A673 (cell line): ENCODE measurements at regions of chr12 and their contacts with region 1.

Region 1: GRCh38 chr12:62435303-62436163 is 31.1 kb upstream of the MON2 start:
- DNase-seq: peak; percentile 79
- H3K4me3 ChIP-seq: peak overlapping the region; percentile 45
- H3K27ac ChIP-seq: no peak overlapping the region
- H3K4me1 ChIP-seq: no peaks in the 10 kb centered on the region
- H3K27me3 ChIP-seq: peaks cover 8% of the 10 kb centered on the region
- CTCF ChIP-seq: peak; percentile 67

Region 2: GRCh38 chr12:62239571-62239970 is 196.0 kb before region 1 on chr12:
- CTCF ChIA-PET with region 1: no interaction called
- POLR2A ChIA-PET with region 1: no interaction called
- intact Hi-C with region 1: no loop called
- DNase-seq: no peak
- H3K4me3 ChIP-seq: no peak overlapping the region
- H3K27ac ChIP-seq: no peak overlapping the region
- H3K4me1 ChIP-seq: no peaks in the 10 kb centered on the region
- H3K27me3 ChIP-seq: no peaks in the 10 kb centered on the region
- CTCF ChIP-seq: no peak

Region 3: GRCh38 chr12:62581288-62582064 is 145.9 kb after region 1 on chr12:
- CTCF ChIA-PET with region 1: no interaction called
- POLR2A ChIA-PET with region 1: no interaction called
- intact Hi-C with region 1: loop called (anchors 10 kb)
- DNase-seq: peak; percentile 62
- H3K4me3 ChIP-seq: no peak overlapping the region
- H3K27ac ChIP-seq: no peak overlapping the region
- H3K4me1 ChIP-seq: no peaks in the 10 kb centered on the region
- H3K27me3 ChIP-seq: no peaks in the 10 kb centered on the region
- CTCF ChIP-seq: peak; percentile 73

Region 4: DNA sequence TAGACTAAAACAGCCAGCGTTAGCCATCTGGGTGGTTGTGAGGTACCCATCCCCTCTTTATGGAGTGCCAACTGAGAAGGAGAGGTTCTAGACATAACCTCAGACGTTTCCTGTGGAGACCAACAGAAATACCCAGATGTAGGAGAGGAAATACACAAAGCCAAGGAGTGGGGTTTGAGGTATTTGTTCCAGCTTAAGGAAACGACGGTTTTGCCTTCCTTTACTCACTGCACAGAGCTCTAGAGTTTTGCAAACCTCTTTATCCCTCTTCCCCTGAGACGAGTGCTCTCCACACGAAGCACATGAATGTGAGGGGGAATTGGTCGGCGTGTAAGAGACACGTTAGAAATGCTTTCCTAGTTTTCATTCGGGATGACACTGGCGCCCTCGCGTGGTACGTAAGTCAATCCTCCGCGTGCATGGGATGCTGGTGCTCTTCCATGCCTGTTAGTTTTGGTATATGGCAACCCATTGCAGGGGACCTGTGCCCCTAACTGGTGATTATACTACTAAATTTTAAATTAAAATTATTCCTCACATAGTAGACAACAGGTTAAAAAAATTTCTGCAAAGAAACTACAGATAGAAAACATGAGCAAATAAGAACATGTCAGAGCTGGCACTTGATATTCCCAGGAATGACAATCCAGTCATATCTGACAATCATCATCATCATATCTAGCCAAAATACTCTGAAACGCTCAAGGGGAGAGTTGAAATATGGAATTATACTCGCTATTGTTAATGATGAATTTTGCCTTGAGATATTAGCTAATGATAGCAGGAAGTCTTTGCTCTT is 377.7 kb after region 1 on chr12:
- CTCF ChIA-PET with region 1: no interaction called
- POLR2A ChIA-PET with region 1: no interaction called
- intact Hi-C with region 1: loop called (anchors 5 kb)
- DNase-seq: peak; percentile 85
- H3K4me3 ChIP-seq: no peak overlapping the region
- H3K27ac ChIP-seq: no peak overlapping the region
- H3K4me1 ChIP-seq: peaks cover 14% of the 10 kb centered on the region
- H3K27me3 ChIP-seq: no peaks in the 10 kb centered on the region
- CTCF ChIP-seq: peak; percentile 89